ENCODE measurements at regions of chr18 and their contacts with region 1.

Region 1: DNA sequence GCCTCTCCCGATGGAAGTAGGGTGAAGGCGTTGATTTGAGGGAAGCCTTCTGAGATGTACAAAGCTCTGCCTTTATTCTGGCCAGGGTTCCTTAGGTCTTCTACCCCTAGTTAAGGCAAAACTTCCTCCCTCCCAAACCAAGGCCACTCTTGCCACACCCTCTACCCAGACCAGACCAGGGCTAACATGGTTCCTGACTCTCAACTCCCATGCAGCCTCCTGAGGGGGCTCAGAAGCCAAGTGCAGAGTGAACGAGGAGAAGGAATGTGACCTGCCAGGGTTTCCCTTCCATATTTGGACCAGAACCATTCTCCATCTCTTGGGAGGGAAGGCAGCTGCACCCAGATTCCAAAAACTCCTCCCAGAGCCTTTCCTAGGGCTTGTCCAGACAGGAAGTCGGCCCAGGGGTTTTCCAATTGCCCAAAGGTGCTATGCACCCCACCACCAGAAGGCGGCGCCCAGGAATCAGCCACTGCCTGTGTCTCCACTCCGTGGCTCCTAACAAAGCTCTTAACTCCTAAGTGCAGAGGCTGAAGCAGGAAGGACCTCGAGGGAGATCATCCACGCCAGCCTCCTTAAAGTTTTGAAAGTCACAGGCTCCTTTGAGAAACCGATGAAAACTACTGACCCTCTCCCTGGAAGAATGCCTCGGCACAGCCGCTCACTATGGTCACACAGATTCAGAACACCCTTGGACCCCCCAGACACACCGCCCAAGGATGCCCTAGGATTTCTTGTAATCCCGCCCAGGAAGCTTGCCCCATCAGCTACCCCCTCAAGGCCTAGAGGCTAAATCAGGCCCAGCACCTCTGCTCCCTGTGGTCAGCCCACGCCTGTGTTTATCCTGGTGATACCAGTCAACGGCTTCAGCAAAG is 157.8 kb downstream of the SMAD2 start:
- DNase-seq: peak; percentile 23 to 56
- ATAC-seq: peak in 7 of 8 donors; percentile 53 to 81 (median 74)
- H3K4me3 ChIP-seq: no peak overlapping the region
- H3K27ac ChIP-seq: no peak overlapping the region
- H3K4me1 ChIP-seq: peaks cover 0 to 5% (median 0%) of the 10 kb centered on the region in 9 donors
- H3K27me3 ChIP-seq: no peaks in the 10 kb centered on the region
- CTCF ChIP-seq: peak; percentile 45 to 87 (median 68)

Region 2: GRCh38 chr18:48017635-48018034 is 245.0 kb after region 1 on chr18:
- intact Hi-C with region 1: loop called in 9 of 10 experiments (anchors 1 to 5 kb)
- DNase-seq: no peak
- ATAC-seq: peak in 1 of 8 donors; percentile 47
- H3K4me3 ChIP-seq: no peak overlapping the region
- H3K27ac ChIP-seq: no peak overlapping the region
- H3K4me1 ChIP-seq: peaks cover 0 to 4% (median 0%) of the 10 kb centered on the region in 9 donors
- H3K27me3 ChIP-seq: peaks cover 0 to 17% (median 6%) of the 10 kb centered on the region in 7 donors
- CTCF ChIP-seq: no peak

Region 3: GRCh38 chr18:48022531-48023329 is 250.1 kb after region 1 on chr18:
- intact Hi-C with region 1: loop called (anchors 1 to 5 kb)
- DNase-seq: peak in 1 of 2 donors; percentile 41
- ATAC-seq: peak; percentile 47 to 78 (median 72)
- H3K4me3 ChIP-seq: no peak overlapping the region
- H3K27ac ChIP-seq: no peak overlapping the region
- H3K4me1 ChIP-seq: peaks cover 5 to 26% (median 15%) of the 10 kb centered on the region in 9 donors
- H3K27me3 ChIP-seq: peaks cover 0 to 23% (median 6%) of the 10 kb centered on the region in 7 donors
- CTCF ChIP-seq: peak; percentile 28 to 70 (median 63)

Measured in heart right ventricle (tissue), 16 donors.